ENCODE measurements at regions of chr16 and their contacts with region 1.

Region 1: GRCh38 chr16:56191156-56191815 is at the start of gene GNAO1:
- DNase-seq: peak in 1 of 2 donors; percentile 79
- H3K4me3 ChIP-seq: peak within 1 kb of the TSS; percentile 93 to 95
- H3K27ac ChIP-seq: peak within 1 kb of the TSS; percentile 92
- H3K4me1 ChIP-seq: peaks cover 0 to 19% of the 10 kb centered on the region in 2 donors
- H3K27me3 ChIP-seq: no peaks in the 10 kb centered on the region
- CTCF ChIP-seq: no peak
- total RNA-seq, gene GNAO1: 0.53 TPM

Region 2: GRCh38 chr16:56108056-56108471 is 83.2 kb before region 1 on chr16:
- intact Hi-C with region 1: no loop called
- DNase-seq: no peak
- H3K4me3 ChIP-seq: no peak overlapping the region
- H3K27ac ChIP-seq: no peak overlapping the region
- H3K4me1 ChIP-seq: no peaks in the 10 kb centered on the region
- H3K27me3 ChIP-seq: no peaks in the 10 kb centered on the region
- CTCF ChIP-seq: no peak

Region 3: GRCh38 chr16:56203052-56203451 is 11.8 kb after region 1 on chr16:
- intact Hi-C with region 1: no loop called
- DNase-seq: no peak
- H3K4me3 ChIP-seq: no peak overlapping the region
- H3K27ac ChIP-seq: no peak overlapping the region
- H3K4me1 ChIP-seq: no peaks in the 10 kb centered on the region
- H3K27me3 ChIP-seq: no peaks in the 10 kb centered on the region
- CTCF ChIP-seq: peak in 1 of 3 experiments; percentile 14

Region 4: DNA sequence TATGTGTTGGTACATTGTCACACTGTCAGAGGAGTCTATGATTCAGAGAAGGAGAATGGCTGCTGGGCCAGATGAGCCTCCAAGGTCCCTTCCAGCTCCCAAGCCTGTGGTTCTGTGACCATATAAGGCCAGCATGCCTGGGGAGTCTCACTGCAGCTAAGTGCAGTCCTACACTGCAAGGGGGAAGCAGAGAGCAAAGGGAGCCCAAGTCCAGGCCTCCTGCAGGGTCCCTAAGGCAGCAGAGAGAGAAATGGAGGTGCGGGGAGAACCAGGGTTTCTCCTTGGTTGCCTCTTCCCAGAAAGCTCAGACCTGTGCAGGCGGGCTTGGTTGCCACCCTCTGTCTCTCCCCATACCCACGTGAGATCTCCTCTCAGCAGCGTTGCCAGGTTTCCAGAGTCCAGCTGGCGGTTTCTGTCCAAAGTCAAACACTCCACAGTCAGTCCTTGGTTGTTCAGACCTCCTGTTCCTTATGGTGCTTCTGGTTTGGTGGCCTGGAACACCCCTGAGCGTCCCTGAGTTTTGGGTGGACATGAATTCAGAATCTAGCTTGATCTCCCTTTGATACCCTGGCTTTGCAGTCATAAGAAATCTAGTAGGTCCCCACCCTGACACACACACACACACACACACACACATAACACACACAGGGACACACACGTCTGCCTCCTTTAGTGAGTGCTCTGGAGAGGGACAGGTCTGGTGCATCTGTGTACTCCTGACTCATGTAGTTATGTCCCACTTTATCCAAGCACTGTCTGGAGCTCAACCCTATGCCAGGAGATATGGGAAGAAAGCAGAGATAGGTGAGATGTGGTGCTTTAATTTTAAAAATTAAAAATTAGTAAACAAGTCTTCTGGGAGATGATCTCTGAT is 78.8 kb after region 1 on chr16:
- intact Hi-C with region 1: loop called (anchors 5 kb)
- DNase-seq: peak in 1 of 2 donors; percentile 72
- H3K4me3 ChIP-seq: no peak overlapping the region
- H3K27ac ChIP-seq: peak overlapping the region; percentile 76 to 78
- H3K4me1 ChIP-seq: peaks cover 0 to 10% of the 10 kb centered on the region in 2 donors
- H3K27me3 ChIP-seq: no peaks in the 10 kb centered on the region
- CTCF ChIP-seq: peak; percentile 12 to 36 (median 13)

Region 5: DNA sequence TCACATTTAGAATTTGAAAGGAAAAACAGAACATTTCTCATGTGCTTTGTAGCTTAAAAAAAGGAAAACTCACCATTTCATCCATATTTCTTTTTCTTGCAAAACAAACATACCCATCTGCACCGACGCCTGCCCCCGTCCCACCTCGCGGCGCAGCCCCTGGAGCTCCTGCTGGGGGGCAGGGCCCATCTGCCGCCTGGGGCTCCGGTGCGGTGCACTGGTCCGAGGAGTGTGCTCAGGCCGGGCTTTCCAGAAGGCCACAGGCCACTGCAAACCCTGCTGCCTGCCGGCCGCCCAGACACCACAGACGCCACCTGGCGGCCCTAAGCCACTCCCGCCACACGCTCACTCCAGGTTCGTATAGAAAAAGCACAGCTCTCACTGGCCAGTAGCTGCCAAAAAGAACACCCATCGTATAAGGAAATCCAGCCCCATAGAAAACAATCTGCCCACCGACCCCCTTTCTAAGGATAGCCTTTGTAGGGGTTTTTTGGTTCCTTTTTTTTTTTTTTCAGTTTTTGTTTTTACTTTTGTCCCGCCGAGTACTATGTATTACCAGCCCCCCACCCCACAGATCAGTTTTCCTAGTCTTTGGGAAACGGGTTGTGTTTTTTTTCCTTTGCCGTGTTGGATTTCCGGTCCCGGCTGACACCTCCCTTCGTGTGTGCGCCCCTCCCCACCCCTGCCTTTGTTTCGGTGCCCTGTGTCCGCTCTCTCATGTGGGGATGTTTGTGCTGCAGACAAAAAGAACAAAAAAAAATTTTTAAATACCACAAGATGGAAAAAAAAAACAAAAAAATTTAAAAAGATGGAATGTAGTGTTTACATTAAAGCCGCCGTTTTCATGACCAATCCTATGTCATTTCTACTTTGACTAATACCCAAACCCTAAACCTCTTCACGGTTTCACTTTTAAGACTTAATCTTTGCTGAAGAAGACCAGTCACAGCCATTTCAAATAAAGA is 165.3 kb after region 1 on chr16:
- intact Hi-C with region 1: loop called (anchors 5 kb)
- DNase-seq: peak in 1 of 2 donors; percentile 87
- H3K4me3 ChIP-seq: peak overlapping the region; percentile 51 to 68
- H3K27ac ChIP-seq: peak overlapping the region; percentile 66 to 90
- H3K4me1 ChIP-seq: peaks cover 3 to 5% of the 10 kb centered on the region in 2 donors
- H3K27me3 ChIP-seq: no peaks in the 10 kb centered on the region
- CTCF ChIP-seq: peak; percentile 47 to 92 (median 81)

Region 6: DNA sequence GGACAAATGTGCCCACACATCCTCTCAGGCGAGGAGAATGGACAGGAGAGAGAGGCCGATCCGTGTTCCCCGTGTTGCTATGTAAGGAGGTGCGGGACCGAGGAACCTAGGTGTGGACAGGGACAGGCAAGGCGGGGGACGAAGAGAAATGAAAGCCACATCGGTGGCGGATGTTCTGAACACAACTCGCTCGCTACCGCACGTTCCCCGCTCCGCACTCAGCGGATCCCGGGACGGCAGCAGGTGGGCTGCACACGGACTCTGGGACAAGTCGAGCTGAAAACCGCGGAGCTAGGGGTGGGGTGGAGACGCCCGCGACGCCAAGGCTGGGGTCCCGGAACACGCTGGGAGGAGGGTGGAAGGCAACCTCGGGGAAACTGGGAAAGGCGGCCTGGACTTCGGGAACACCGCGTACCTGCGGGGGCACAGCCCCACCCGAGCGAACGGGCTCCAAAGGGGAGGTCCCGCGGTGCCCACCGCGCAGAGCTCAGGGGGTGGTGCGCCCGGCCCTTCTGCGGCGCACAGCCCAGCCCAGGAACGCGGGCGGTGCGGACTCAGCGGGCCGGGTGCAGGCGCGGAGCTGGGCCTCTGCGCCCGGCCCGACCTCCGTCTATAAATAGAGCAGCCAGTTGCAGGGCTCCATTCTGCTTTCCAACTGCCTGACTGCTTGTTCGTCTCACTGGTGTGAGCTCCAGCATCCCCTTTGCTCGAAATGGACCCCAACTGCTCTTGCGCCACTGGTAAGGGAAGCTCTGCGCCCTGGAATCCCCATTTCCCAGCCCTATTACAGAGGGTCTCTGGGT is 434.1 kb after region 1 on chr16 and contains the start of gene MT1E:
- intact Hi-C with region 1: loop called (anchors 5 kb)
- DNase-seq: peak in 1 of 2 donors; percentile 93
- H3K4me3 ChIP-seq: peak within 1 kb of the TSS; percentile 71 to 82
- H3K27ac ChIP-seq: peak within 1 kb of the TSS; percentile 96
- H3K4me1 ChIP-seq: peaks cover 3 to 4% of the 10 kb centered on the region in 2 donors
- H3K27me3 ChIP-seq: no peaks in the 10 kb centered on the region
- CTCF ChIP-seq: no peak
- total RNA-seq, gene MT1E: 456 TPM

Region 7: DNA sequence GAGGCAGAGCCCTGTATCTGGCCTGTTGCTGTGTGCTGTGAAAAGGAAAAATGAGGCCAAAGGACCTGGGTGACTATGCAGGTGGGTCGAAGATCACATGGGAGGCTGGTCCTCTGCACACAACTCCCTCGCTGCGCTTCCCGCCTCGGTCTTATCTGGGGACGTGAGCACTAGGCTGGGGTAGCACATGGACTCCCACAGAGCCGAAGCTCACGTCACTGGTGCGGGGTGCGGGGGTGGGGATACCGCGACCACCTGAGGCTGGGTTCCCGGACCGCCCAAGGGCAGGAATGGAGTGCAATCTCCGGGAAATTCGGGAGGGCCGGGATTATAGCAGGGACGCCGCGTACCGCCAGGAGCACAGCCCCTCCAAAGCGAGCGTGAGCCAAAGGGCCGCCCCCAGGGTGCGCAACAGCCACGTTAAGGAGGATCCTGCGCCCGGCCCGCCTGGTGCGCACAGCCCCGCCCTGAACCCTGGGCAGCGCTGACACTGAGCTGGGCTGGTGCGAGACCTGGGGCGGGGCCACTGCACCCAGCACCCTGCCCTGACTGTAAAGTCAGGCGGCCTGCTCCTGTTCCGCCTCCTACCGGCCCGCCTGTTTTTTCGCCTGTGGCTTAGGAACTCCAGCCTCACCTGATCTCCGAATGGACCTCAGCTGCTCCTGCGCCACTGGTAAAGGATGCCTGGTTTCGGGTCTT is 451.9 kb after region 1 on chr16:
- intact Hi-C with region 1: no loop called
- DNase-seq: peak; percentile 50 to 91
- H3K4me3 ChIP-seq: peak overlapping the region; percentile 48 to 62
- H3K27ac ChIP-seq: peak overlapping the region; percentile 62 to 78
- H3K4me1 ChIP-seq: peaks cover 6 to 23% of the 10 kb centered on the region in 2 donors
- H3K27me3 ChIP-seq: no peaks in the 10 kb centered on the region
- CTCF ChIP-seq: peak; percentile 37 to 71 (median 53)